Activated B cell treated with CpG ODN at 0.5 μM for 24 hours (primary cell): ENCODE measurements at regions of chrX and their contacts with region 1.

Region 1: DNA sequence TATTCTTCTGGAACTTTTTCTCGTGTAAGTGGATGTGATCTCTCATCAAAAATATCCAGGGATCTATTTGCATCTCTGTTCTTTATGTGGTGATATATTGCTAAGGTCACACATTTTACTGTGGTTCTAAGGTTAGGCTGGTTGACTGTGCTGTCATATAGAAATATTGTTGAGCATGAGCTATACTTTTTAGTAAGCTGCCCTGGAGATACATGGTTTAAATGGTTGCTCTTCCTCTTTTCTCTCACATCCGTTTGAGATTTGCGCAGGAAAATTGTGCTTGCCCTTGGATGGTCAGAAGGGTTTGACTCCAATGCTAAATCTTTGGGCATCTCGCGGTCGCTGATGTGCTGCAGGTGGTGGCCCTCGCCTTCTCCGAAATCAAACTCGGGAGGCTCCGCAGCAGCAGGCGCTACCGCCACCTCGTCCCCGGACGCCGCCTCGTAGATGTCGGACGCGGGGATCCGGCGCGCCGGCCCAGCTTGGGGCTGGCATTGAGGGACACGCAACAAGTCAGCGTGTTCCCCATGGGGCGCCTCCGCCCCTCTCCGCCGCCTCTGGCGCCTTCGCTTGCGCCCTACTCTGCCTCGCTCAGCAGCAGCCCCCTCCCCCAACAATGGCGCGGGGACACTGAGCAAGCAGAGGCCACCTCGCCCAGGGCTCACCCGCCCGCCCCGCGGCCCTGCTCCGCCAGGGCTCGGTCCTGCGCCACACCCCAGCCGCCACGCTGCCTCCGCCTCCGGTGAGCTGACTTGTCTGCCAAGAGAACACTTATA is 154.5 kb downstream of the MSN start:
- DNase-seq: peak; percentile 35
- ATAC-seq: peak; percentile 79
- H3K4me3 Mint-ChIP-seq: peak overlapping the region; percentile 78
- H3K27ac Mint-ChIP-seq: peak overlapping the region; percentile 72
- H3K4me1 Mint-ChIP-seq: peaks cover 16% of the 10 kb centered on the region
- H3K27me3 Mint-ChIP-seq: no peaks in the 10 kb centered on the region
- CTCF ChIP-seq: no peak

Region 2: GRCh38 chrX:65488501-65488900 is 333.4 kb before region 1 on chrX:
- CTCF ChIA-PET with region 1: no interaction called
- POLR2A ChIA-PET with region 1: no interaction called
- intact Hi-C with region 1: no loop called
- DNase-seq: no peak
- ATAC-seq: no peak
- H3K4me3 Mint-ChIP-seq: no peak overlapping the region
- H3K27ac Mint-ChIP-seq: no peak overlapping the region
- H3K4me1 Mint-ChIP-seq: no peaks in the 10 kb centered on the region
- H3K27me3 Mint-ChIP-seq: no peaks in the 10 kb centered on the region
- CTCF ChIP-seq: no peak

Region 3: GRCh38 chrX:65718538-65718937 is 103.4 kb before region 1 on chrX:
- CTCF ChIA-PET with region 1: no interaction called
- POLR2A ChIA-PET with region 1: interaction called, 17 read pairs
- intact Hi-C with region 1: no loop called
- DNase-seq: no peak
- ATAC-seq: no peak
- H3K4me3 Mint-ChIP-seq: no peak overlapping the region
- H3K27ac Mint-ChIP-seq: no peak overlapping the region
- H3K4me1 Mint-ChIP-seq: peaks cover 89% of the 10 kb centered on the region
- H3K27me3 Mint-ChIP-seq: no peaks in the 10 kb centered on the region
- CTCF ChIP-seq: no peak

Region 4: DNA sequence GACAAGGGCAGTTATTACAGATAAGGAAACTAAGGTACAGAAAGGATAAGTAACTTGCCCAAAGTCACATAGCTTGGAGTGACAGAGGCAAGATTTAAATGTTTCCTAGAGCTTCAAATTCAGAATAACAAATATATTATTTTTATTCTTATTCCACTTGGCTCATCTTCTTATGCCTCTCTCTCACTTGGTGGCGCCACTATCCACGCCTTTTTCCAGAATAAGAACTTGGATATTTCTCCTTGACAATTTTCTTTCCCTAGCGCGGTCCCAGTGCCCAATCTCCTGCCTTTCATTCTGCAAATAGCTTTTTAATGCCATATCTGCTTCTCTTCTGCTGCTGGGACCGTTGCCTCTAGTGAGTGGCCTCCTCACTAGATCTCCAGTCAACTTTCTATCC is 75.9 kb before region 1 on chrX:
- CTCF ChIA-PET with region 1: no interaction called
- POLR2A ChIA-PET with region 1: no interaction called
- intact Hi-C with region 1: loop called (anchors 2 kb)
- DNase-seq: no peak
- ATAC-seq: no peak
- H3K4me3 Mint-ChIP-seq: no peak overlapping the region
- H3K27ac Mint-ChIP-seq: peak overlapping the region; percentile 0
- H3K4me1 Mint-ChIP-seq: peaks cover 40% of the 10 kb centered on the region
- H3K27me3 Mint-ChIP-seq: no peaks in the 10 kb centered on the region
- CTCF ChIP-seq: no peak